GM12878 (cell line): ENCODE measurements at regions of chr16 and their contacts with region 1.

Region 1: DNA sequence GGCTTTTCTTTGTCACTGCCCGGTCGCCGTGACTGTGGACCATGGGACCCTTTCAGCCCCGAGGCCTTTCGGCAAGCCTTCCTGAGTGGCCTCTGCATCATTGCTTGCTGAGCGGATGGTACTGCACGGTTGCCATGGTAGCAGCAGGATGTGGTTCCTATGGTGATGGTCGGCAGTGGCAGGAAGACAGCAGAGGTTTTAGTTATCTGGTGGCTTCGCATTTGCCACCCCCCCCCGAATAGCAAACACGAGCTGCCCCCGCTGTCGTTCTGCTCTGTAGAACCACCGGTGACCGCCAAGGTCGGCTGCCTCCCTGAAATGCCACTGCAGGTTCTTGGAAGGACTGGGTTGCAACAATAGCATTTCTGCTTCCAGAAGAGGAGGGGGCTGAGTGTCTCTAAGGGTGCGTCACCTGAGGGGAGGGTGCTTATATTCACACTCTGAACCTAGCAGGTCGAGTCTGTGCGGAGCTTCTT is 76.6 kb downstream of the CMIP start:
- DNase-seq: no peak
- ATAC-seq: peak; percentile 49
- H3K4me3 ChIP-seq: no peak overlapping the region
- H3K27ac ChIP-seq: no peak overlapping the region
- H3K4me1 ChIP-seq: peaks cover 28% of the 10 kb centered on the region
- H3K27me3 ChIP-seq: no peaks in the 10 kb centered on the region
- CTCF ChIP-seq: no peak
- EP300 ChIP-seq: no peak
- POLR2A ChIP-seq: no peak
- RAD21 ChIP-seq: no peak

Region 2: DNA sequence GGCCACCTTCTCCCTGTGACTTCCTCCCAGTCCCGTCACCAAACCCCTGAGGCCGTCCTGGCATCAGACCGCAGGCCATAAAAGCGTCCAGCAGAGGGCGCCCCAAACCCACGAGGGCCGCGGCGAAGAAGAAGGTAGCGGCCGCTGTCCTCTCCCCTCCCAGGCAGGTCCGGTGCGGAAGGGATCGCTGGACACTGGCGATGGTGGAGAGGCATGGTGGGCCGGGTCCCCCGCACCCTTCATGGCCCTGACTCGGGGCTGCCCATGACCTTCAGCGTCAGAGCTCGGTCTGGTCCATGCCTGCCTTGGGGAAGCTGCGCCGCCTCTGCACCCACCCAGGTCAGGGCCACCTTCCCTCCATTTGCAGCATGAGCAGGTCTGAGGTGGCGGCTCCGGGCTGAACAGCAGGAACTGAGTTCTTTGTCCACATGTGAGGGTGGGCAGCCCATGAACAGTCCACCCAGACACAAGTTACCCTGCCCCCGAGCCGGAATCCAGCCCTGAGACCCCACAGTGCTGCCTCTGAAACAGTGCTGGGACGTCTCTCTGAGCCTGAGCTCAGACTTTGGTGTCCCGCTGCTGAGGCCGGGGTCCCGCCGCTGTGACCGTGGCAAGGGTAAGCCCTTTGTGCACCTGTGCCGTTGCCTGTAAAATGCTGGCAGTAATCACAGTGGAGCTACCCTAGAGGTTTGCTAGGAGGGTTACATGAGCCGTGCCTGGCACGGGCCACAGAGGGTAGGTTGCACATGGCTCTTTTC is 117.4 kb before region 1 on chr16:
- CTCF ChIA-PET with region 1: no interaction called
- POLR2A ChIA-PET with region 1: no interaction called
- RAD21 ChIA-PET with region 1: interaction called, 3 read pairs
- SMC1A ChIA-PET with region 1: interaction called, 4 read pairs
- in situ Hi-C with region 1: no loop called
- intact Hi-C with region 1: loop called (anchors 5 kb)
- DNase-seq: peak; percentile 28
- ATAC-seq: peak; percentile 100
- H3K4me3 ChIP-seq: no peak overlapping the region
- H3K27ac ChIP-seq: no peak overlapping the region
- H3K4me1 ChIP-seq: no peaks in the 10 kb centered on the region
- H3K27me3 ChIP-seq: no peaks in the 10 kb centered on the region; a peak in 1 of 4 replicates
- CTCF ChIP-seq: peak; percentile 87 to 96 (median 88)
- EP300 ChIP-seq: no peak
- POLR2A ChIP-seq: no peak
- RAD21 ChIP-seq: peak; percentile 99

Region 3: GRCh38 chr16:81444448-81445121 is 76.6 kb before region 1 on chr16 and contains the start of gene CMIP:
- CTCF ChIA-PET with region 1: interaction called, 3 read pairs
- POLR2A ChIA-PET with region 1: no interaction called
- RAD21 ChIA-PET with region 1: interaction called, 3 read pairs
- SMC1A ChIA-PET with region 1: interaction called, 3 read pairs
- in situ Hi-C with region 1: no loop called
- intact Hi-C with region 1: loop called (anchors 5 kb)
- DNase-seq: no peak
- ATAC-seq: peak; percentile 59
- H3K4me3 ChIP-seq: peak within 1 kb of the TSS; percentile 100
- H3K27ac ChIP-seq: peak within 1 kb of the TSS; percentile 87
- H3K4me1 ChIP-seq: peaks cover 13% of the 10 kb centered on the region
- H3K27me3 ChIP-seq: peaks cover 0 to 2% of the 10 kb centered on the region in 2 experiments; a peak in 1 of 4 replicates
- CTCF ChIP-seq: no peak
- EP300 ChIP-seq: no peak
- POLR2A ChIP-seq: no peak
- RAD21 ChIP-seq: no peak
- polyA plus RNA-seq, gene CMIP: 1.4 to 1.7 TPM

Region 4: GRCh38 chr16:81608518-81609209 is 87.5 kb after region 1 on chr16:
- CTCF ChIA-PET with region 1: no interaction called
- POLR2A ChIA-PET with region 1: no interaction called
- RAD21 ChIA-PET with region 1: no interaction called
- SMC1A ChIA-PET with region 1: no interaction called
- in situ Hi-C with region 1: no loop called
- intact Hi-C with region 1: loop called (anchors 5 kb)
- DNase-seq: no peak
- ATAC-seq: peak; percentile 91
- H3K4me3 ChIP-seq: no peak overlapping the region
- H3K27ac ChIP-seq: peak overlapping the region; percentile 7; the same call in 1 of the 2 replicates
- H3K4me1 ChIP-seq: peaks cover 9% of the 10 kb centered on the region; the same call in 1 of the 2 replicates
- H3K27me3 ChIP-seq: no peaks in the 10 kb centered on the region
- CTCF ChIP-seq: no peak
- EP300 ChIP-seq: no peak
- POLR2A ChIP-seq: no peak
- RAD21 ChIP-seq: no peak